Adrenal gland (tissue), 19 donors: ENCODE measurements at regions of chr11 and their contacts with region 1.

Region 1: DNA sequence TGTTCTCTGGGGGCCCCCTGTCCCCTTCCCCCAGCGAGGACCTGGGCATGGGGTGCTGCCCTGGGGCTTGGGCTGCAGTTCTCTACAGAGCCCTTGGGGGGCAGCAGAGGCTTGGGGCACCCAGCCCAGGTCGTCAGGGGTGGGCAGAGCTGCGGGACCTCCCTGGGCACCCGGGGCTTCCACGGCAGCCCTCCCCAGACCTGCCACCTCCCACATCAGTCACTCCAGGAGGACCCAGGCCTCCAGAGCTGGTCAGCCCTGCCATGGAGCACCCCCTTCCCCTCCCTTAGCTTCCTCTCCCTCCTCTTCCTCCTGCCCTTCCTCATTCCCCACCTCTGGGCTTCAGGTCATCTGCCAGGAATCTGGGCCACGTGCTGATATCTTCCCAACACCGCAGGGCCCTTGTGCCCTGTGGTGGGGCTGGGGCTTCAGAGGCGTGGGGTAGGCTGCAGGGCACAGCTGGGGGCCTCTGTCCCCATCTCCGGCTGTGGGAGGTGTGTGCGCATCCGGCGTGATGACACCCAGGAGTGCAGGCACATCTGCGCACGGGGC is 5.8 kb downstream of the TSPAN4 start:
- DNase-seq: peak in 3 of 7 donors; percentile 56 to 68 (median 59)
- H3K4me3 ChIP-seq: no peak overlapping the region
- H3K27ac ChIP-seq: no peak overlapping the region
- H3K4me1 ChIP-seq: peaks cover 26 to 32% of the 10 kb centered on the region in 2 donors
- H3K27me3 ChIP-seq: no peaks in the 10 kb centered on the region
- CTCF ChIP-seq: peak; percentile 77 to 87 (median 82)
- POLR2A ChIP-seq: no peak

Region 2: DNA sequence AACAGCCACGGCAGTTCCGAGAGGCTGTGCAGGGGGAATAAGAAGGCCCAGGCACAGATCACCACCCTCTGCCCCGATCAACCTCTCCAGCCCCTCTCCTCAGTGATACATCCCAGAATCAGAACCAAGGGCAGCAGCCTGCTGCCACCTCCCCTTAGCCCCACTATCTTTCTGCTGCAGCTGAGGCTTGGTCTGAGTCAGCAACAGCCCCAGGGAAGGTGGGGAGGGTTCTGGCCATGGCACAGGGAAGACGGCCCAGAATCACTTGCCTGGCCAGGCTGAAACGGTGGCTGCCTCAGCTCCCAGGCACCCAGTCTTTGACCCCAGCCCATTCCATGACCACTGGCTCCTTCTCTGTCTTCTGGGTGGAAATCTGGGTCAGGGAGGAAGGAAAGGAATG is 59.8 kb after region 1 on chr11:
- intact Hi-C with region 1: loop called in 1 of 2 experiments (anchors 2 kb)
- DNase-seq: peak in 4 of 7 donors; percentile 38 to 64 (median 48)
- H3K4me3 ChIP-seq: no peak overlapping the region
- H3K27ac ChIP-seq: no peak overlapping the region
- H3K4me1 ChIP-seq: peaks cover 12 to 17% of the 10 kb centered on the region in 2 donors
- H3K27me3 ChIP-seq: no peaks in the 10 kb centered on the region
- CTCF ChIP-seq: no peak
- POLR2A ChIP-seq: no peak

Region 3: DNA sequence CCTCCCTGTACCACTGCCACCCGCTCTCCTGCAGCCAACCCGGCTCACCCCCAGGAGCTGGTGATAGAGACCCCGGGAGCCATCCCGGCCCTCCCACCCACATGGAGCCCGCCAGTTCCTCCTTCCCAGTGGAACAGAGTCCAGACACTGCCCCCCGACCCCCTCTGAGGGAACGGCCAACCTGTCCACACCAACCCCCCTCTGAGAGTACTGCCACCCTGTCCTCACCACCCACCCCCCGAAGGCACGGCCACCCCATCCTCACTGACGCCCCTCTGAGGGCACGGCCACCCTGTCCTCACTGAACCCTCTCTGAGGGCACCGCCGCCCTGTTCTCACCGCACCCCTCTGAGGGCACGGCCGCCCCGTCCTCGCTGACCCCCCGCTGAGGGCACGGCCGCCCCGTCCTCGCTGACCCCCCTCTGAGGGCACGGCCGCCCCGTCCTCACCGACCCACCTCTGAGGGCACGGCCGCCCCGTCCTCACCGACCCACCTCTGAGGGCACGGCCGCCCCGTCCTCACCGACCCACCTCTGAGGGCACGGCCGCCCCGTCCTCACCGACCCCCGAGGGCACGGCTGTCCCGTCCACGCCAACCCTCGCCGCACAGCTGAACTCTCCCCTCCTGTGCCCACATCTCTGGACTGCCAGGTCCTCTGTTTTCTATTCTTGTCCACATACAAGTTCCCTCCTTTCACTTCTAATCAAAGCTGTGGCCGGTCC is 443.0 kb after region 1 on chr11:
- intact Hi-C with region 1: no loop called
- DNase-seq: peak in 1 of 7 donors; percentile 8
- H3K4me3 ChIP-seq: no peak overlapping the region
- H3K27ac ChIP-seq: no peak overlapping the region
- H3K4me1 ChIP-seq: no peaks in the 10 kb centered on the region
- H3K27me3 ChIP-seq: no peaks in the 10 kb centered on the region
- CTCF ChIP-seq: no peak
- POLR2A ChIP-seq: no peak